GM12878 (cell line): ENCODE measurements at regions of chr15 and their contacts with region 1.

Region 1: GRCh38 chr15:51162865-51163762 is 68.4 kb upstream of the TNFAIP8L3 start:
- DNase-seq: peak; percentile 9
- ATAC-seq: peak; percentile 99
- H3K4me3 ChIP-seq: no peak overlapping the region
- H3K27ac ChIP-seq: no peak overlapping the region
- H3K4me1 ChIP-seq: no peaks in the 10 kb centered on the region
- H3K27me3 ChIP-seq: no peaks in the 10 kb centered on the region
- CTCF ChIP-seq: peak; percentile 87 to 95 (median 91)
- EP300 ChIP-seq: no peak
- POLR2A ChIP-seq: no peak
- RAD21 ChIP-seq: peak; percentile 92

Region 2: DNA sequence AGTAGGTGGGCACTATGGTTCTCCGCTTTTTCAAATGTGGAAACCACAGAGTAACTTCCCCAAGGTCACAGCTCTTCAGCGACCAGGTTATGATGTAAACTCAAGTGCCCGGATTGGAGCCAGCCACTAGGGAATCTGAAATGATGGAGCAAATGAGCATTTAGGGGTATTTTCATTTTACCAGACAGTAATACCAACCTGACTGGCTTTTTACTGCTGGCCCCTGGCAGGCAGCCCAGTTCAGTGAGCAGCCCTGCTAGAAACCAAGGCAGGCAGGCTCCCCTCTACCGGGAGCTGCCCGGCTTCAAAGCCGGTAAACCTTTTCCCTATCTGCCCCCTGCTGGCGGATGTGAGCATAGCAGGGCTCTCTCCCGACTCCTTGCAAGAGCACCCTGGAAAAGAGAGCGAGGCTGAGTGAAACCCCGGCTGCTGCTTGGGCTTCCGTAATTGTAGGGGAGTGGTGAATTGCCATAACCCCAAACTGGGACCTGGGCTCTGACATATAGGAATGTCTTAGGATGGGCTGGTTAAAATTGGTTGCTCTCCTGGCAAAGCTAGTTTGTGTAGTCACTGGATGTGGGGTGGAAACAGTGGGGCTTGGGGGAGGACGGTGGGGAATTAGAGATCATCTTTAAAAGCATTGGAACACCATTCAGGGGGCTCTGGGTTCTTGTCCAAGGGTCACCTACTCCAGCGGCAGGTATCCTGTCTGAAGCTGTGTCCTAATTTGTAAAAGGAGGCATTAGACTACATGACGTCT is 29.6 kb after region 1 on chr15:
- CTCF ChIA-PET with region 1: interaction called, 102 read pairs
- POLR2A ChIA-PET with region 1: no interaction called
- RAD21 ChIA-PET with region 1: interaction called, 39 read pairs
- SMC1A ChIA-PET with region 1: interaction called, 28 read pairs
- in situ Hi-C with region 1: no loop called
- intact Hi-C with region 1: loop called (anchors 1 kb)
- DNase-seq: peak; percentile 20
- ATAC-seq: peak; percentile 97
- H3K4me3 ChIP-seq: no peak overlapping the region
- H3K27ac ChIP-seq: no peak overlapping the region
- H3K4me1 ChIP-seq: no peaks in the 10 kb centered on the region
- H3K27me3 ChIP-seq: no peaks in the 10 kb centered on the region; a peak in 2 of 4 replicates
- CTCF ChIP-seq: peak; percentile 91 to 96 (median 92)
- EP300 ChIP-seq: no peak
- POLR2A ChIP-seq: no peak
- RAD21 ChIP-seq: peak; percentile 79

Region 3: DNA sequence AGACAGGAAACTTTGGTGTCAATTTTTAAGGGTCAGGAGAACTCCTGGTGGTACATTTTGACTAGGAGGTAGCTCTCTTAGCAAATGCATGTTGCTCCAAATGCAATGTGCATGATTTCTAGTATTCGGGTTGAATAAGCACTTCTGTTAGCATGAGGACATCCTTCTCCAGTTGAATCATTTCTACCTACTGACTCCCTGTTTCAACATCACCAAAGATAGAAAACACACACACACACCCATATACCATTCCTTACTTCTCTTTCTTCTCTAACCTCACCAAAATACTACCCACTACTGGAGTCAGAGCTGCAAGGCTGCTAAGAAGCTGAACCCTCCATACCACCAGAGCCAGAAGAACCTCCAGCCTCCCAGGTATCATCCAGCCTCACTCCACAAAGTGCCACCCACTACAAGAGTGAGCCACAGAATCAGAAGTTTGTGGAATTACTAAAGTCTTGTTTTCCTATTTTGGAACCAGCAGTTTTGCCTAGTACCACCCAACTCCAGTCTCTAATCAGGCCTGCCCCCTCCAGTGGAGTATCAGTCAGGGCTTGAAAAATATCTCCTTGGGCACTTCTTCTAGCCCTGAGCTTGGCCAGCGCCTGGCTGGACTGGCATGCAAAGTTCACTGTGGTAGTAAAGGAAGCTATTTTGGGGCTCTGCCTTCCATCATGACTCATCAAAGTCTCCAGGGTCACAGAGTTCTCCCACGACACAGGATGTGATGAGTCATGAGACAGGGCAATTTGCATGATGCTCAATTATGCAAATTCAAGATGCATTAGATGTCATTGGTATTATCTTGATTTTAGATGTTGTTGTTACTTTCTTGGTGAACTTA is 65.0 kb after region 1 on chr15:
- CTCF ChIA-PET with region 1: interaction called, 11 read pairs
- POLR2A ChIA-PET with region 1: no interaction called
- RAD21 ChIA-PET with region 1: interaction called, 4 read pairs
- SMC1A ChIA-PET with region 1: interaction called, 3 read pairs
- in situ Hi-C with region 1: no loop called
- intact Hi-C with region 1: no loop called
- DNase-seq: peak; percentile 76
- ATAC-seq: peak; percentile 97
- H3K4me3 ChIP-seq: peak overlapping the region; percentile 24; the same call in 1 of the 2 replicates
- H3K27ac ChIP-seq: peak overlapping the region; percentile 75
- H3K4me1 ChIP-seq: peaks cover 16% of the 10 kb centered on the region
- H3K27me3 ChIP-seq: no peaks in the 10 kb centered on the region
- CTCF ChIP-seq: no peak
- EP300 ChIP-seq: no peak
- POLR2A ChIP-seq: peak; percentile 27; the same call in 1 of the 2 replicates
- RAD21 ChIP-seq: no peak

Region 4: GRCh38 chr15:51286791-51287190 is 123.7 kb after region 1 on chr15:
- CTCF ChIA-PET with region 1: interaction called, 57 read pairs
- POLR2A ChIA-PET with region 1: no interaction called
- RAD21 ChIA-PET with region 1: interaction called, 3 read pairs
- SMC1A ChIA-PET with region 1: interaction called, 22 read pairs
- in situ Hi-C with region 1: no loop called
- intact Hi-C with region 1: loop called (anchors 1 kb)
- DNase-seq: no peak
- ATAC-seq: peak; percentile 49
- H3K4me3 ChIP-seq: no peak overlapping the region
- H3K27ac ChIP-seq: no peak overlapping the region
- H3K4me1 ChIP-seq: peaks cover 10% of the 10 kb centered on the region
- H3K27me3 ChIP-seq: peaks cover 0 to 1% of the 10 kb centered on the region in 2 experiments; a peak in 3 of 4 replicates
- CTCF ChIP-seq: peak; percentile 14 to 32 (median 20); a peak in 4 of 6 replicates
- EP300 ChIP-seq: no peak
- POLR2A ChIP-seq: no peak
- RAD21 ChIP-seq: peak; percentile 40

Region 5: GRCh38 chr15:51366960-51367648 is 204.0 kb after region 1 on chr15:
- CTCF ChIA-PET with region 1: interaction called, 10 read pairs
- POLR2A ChIA-PET with region 1: no interaction called
- RAD21 ChIA-PET with region 1: no interaction called
- SMC1A ChIA-PET with region 1: interaction called, 10 read pairs
- in situ Hi-C with region 1: no loop called
- intact Hi-C with region 1: no loop called
- DNase-seq: no peak
- ATAC-seq: no peak
- H3K4me3 ChIP-seq: no peak overlapping the region
- H3K27ac ChIP-seq: no peak overlapping the region
- H3K4me1 ChIP-seq: peaks cover 4% of the 10 kb centered on the region
- H3K27me3 ChIP-seq: peaks cover 5 to 8% of the 10 kb centered on the region in 2 experiments; a peak in 3 of 4 replicates
- CTCF ChIP-seq: no peak
- EP300 ChIP-seq: no peak
- POLR2A ChIP-seq: no peak
- RAD21 ChIP-seq: no peak

Region 6: DNA sequence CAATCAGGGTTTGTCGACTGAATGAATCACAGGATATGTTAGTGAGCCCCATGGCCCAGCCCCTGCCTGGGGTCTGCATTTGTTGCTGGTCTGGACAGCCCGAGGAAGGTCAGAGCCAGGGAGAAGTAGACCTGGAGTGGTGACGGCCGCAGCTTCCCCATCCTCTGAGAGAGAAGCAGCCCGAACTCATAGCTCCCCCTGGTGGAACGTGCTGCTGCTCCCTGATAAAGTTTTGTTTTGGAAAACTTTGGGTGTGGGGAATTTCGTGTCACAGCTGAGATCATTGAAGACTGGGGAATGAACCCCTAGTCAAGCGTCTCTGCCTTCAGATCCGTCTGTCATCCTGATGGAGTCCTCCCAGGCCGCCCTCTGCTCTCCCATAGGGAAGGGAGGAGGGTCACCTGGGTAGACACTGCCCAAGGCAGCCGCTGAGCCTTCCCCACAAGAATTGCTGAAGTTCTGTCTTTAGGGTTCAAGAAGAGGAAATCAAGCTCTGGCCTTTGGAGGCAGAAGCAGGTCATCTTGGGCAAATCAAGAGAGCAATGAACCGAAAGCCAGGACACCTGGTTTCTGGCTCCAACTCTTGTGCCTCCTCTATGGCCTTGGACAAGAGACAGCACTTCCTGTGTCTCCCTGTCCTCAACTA is 238.9 kb after region 1 on chr15:
- CTCF ChIA-PET with region 1: interaction called, 16 read pairs
- POLR2A ChIA-PET with region 1: no interaction called
- RAD21 ChIA-PET with region 1: interaction called, 4 read pairs
- SMC1A ChIA-PET with region 1: interaction called, 3 read pairs
- in situ Hi-C with region 1: no loop called
- intact Hi-C with region 1: loop called (anchors 1 kb)
- DNase-seq: no peak
- ATAC-seq: peak; percentile 48; the same call in 2 of the 3 replicates
- H3K4me3 ChIP-seq: no peak overlapping the region
- H3K27ac ChIP-seq: no peak overlapping the region
- H3K4me1 ChIP-seq: no peaks in the 10 kb centered on the region
- H3K27me3 ChIP-seq: peaks cover 3 to 4% of the 10 kb centered on the region in 2 experiments; a peak in 3 of 4 replicates
- CTCF ChIP-seq: peak; percentile 48 to 60 (median 52)
- EP300 ChIP-seq: no peak
- POLR2A ChIP-seq: no peak
- RAD21 ChIP-seq: peak; percentile 56